ENCODE measurements at regions of chr17 and their contacts with region 1.

Region 1: GRCh38 chr17:61412143-61412859 is 12.7 kb downstream of the TBX2 start:
- DNase-seq: peak; percentile 83 to 84 (median 84)
- ATAC-seq: peak; percentile 76 to 82 (median 78)
- H3K4me3 ChIP-seq: peak overlapping the region; percentile 54 to 58 (median 58)
- H3K27ac ChIP-seq: peak overlapping the region; percentile 55 to 84 (median 76)
- H3K4me1 ChIP-seq: peaks cover 0 to 29% (median 2%) of the 10 kb centered on the region in 4 donors
- H3K27me3 ChIP-seq: no peaks in the 10 kb centered on the region
- CTCF ChIP-seq: peak; percentile 99 to 100 (median 99)
- POLR2A ChIP-seq: peak; percentile 24

Region 2: GRCh38 chr17:60720763-60721531 is 691.4 kb before region 1 on chr17:
- intact Hi-C with region 1: loop called in 1 of 2 experiments (anchors 10 kb)
- DNase-seq: no peak
- ATAC-seq: peak; percentile 59 to 77 (median 69)
- H3K4me3 ChIP-seq: no peak overlapping the region
- H3K27ac ChIP-seq: no peak overlapping the region
- H3K4me1 ChIP-seq: no peaks in the 10 kb centered on the region
- H3K27me3 ChIP-seq: no peaks in the 10 kb centered on the region
- CTCF ChIP-seq: peak; percentile 77 to 88 (median 84)
- POLR2A ChIP-seq: no peak

Region 3: GRCh38 chr17:61002316-61002736 is 410.0 kb before region 1 on chr17:
- intact Hi-C with region 1: loop called in 1 of 2 experiments (anchors 5 kb)
- DNase-seq: no peak
- ATAC-seq: peak; percentile 53 to 70 (median 62)
- H3K4me3 ChIP-seq: no peak overlapping the region
- H3K27ac ChIP-seq: no peak overlapping the region
- H3K4me1 ChIP-seq: no peaks in the 10 kb centered on the region
- H3K27me3 ChIP-seq: no peaks in the 10 kb centered on the region
- CTCF ChIP-seq: peak; percentile 50 to 68 (median 64)
- POLR2A ChIP-seq: no peak

Region 4: DNA sequence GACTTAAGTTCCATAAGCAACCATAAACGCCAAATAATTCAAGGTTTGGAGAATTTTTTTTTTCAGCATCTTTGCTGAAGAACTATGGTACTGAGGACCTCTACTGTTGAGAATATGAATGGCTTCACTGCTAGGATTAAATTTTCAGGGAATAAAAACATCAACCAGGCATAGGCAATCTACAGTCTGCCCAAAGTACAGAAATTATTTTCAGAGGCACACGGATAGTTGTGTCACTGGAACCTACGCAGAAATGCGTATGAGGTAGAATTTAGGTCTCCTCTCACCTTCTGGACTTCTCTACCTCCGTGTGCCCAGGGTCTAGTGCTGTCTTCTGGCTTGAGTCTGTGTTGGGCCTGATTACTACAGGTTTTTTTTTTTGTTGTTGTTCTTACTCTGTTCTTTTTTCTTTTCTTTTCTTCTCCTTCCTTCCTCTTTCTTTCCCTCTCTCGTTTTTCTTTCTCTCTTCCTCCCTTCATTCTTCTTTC is 139.0 kb after region 1 on chr17:
- intact Hi-C with region 1: loop called (anchors 5 kb)
- DNase-seq: no peak
- ATAC-seq: peak; percentile 62 to 73 (median 66)
- H3K4me3 ChIP-seq: no peak overlapping the region
- H3K27ac ChIP-seq: no peak overlapping the region
- H3K4me1 ChIP-seq: no peaks in the 10 kb centered on the region
- H3K27me3 ChIP-seq: no peaks in the 10 kb centered on the region
- CTCF ChIP-seq: peak; percentile 66 to 76 (median 72)
- POLR2A ChIP-seq: no peak

Region 5: DNA sequence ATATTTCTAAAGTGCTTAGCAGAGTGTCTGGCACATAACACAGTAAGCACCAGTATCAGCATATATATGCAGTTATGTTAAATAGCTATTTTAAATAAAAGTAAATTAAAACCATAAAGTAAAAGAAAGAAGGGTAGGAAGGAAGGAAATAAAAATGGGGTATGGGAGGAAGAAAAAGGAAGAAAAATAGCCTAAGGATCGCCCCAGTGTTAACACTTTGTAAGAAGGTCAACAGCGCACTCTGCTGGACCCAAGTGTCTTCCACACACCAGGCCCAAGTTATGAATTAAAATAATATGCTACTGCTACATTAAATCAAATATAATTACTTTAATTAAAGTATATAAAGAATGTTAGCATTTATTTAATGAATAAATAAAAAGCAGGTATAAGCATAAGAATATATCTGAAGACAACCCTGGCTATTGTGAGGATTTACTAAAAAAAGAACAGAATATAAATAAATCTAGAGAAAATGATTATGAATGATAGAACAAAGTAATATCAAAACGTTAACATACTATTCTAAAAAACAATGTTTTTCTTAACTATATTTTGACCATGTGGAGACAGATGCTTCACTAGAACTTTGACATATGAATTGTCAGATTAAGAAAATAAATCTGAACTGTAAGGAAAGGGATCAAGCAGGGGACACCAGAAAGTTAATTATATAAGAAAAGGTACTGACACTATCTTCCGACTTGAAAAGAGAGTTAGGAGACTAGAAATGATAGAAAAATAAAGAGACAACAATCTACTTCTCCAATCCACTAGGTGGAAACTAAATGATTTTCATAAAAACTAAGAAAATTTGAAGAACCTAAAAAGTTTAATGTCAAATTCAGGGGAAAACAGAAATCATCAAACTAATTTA is 425.1 kb after region 1 on chr17:
- intact Hi-C with region 1: loop called in 1 of 2 experiments (anchors 10 kb)
- DNase-seq: peak in 2 of 3 donors; percentile 52 to 58
- ATAC-seq: peak; percentile 74 to 80 (median 78)
- H3K4me3 ChIP-seq: no peak overlapping the region
- H3K27ac ChIP-seq: no peak overlapping the region
- H3K4me1 ChIP-seq: no peaks in the 10 kb centered on the region
- H3K27me3 ChIP-seq: no peaks in the 10 kb centered on the region
- CTCF ChIP-seq: peak; percentile 63 to 86 (median 80)
- POLR2A ChIP-seq: no peak

Measured in right lobe of liver (tissue), 6 donors.